Motor neuron (in vitro differentiated cells): ENCODE measurements at regions of chr12 and their contacts with region 1.

Region 1: GRCh38 chr12:52870351-52871290 is 21.8 kb upstream of the KRT78 start:
- ATAC-seq: peak in 3 of 8 experiments; percentile 6 to 54 (median 10)
- H3K4me3 ChIP-seq: no peak overlapping the region
- H3K27ac ChIP-seq: no peak overlapping the region
- H3K4me1 ChIP-seq: peaks cover 0 to 13% of the 10 kb centered on the region in 2 donors

Region 2: DNA sequence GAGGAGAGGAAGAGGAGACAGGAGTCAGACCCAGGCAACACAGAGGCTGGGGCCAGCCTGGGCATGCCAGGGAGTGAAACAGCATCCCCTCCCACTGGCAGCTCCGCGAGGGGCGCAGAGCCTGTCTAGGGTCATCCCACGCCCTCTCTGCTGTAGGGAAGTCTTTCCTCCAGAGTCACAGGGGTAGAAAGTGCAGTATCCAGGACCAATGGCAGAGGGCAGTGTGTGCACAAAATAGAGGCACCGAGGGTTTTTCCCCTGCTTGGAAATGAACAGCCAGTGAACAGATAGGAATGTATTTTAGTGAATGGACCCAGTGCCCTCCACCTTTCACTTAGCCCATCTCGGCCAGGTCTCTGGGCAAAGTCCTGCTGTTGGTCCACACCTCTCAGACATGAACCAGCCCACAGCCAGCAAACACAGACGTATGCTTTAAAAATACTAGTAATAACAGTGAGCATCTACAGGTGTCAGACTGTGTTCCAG is 287.6 kb before region 1 on chr12:
- in situ Hi-C with region 1: loop called in 4 of 9 experiments (anchors 5 to 25 kb)
- ATAC-seq: peak; percentile 50 to 91 (median 74)
- H3K4me3 ChIP-seq: no peak overlapping the region
- H3K27ac ChIP-seq: no peak overlapping the region
- H3K4me1 ChIP-seq: no peaks in the 10 kb centered on the region

Region 3: GRCh38 chr12:52667511-52667910 is 203.1 kb before region 1 on chr12:
- in situ Hi-C with region 1: loop called in 1 of 9 experiments (anchors 25 kb)
- ATAC-seq: peak in 2 of 8 experiments; percentile 30 to 43
- H3K4me3 ChIP-seq: no peak overlapping the region
- H3K27ac ChIP-seq: no peak overlapping the region
- H3K4me1 ChIP-seq: no peaks in the 10 kb centered on the region

Region 4: DNA sequence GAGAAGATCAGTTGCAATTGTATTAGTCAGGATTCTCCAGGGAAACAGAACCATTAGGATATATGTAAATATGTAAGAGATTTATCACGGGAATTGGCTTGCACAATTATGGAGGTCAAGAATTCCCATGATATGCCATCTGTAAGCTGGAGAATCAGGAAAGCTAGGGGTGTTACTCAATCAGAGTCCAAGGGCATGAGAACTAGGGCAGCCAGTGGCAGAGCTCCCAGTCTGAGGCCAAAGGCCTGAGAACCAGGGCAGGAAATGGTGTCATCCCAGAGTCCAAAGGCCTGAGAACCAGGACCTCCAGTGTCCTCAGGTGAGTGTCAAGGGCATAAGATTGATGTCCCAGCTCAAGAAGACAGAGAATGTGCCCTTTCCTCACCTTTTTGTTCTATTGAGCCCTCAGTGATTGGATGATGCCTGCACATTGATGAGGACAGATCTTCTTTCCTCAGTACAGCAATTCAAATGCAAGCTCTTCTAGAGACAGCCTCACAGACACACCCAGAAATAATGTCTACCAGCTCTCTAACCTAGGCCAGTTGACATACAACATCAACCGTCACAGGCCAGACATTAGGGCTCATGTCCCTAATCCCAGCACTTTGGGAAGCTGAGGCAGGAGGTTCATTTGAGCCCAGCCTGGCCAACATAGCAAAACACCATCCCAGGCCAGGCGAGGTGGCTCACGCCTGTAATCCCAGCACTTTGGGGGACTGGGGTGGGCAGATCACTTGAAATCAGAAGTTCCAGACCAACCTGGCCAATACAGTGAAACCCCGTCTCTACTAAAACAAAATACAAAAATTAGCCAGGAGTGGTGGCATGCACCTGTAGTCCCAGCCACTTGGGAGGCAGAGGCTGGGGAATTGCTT is 275.0 kb after region 1 on chr12:
- in situ Hi-C with region 1: no loop called
- ATAC-seq: peak in 3 of 8 experiments; percentile 55 to 68 (median 61)
- H3K4me3 ChIP-seq: no peak overlapping the region
- H3K27ac ChIP-seq: no peak overlapping the region
- H3K4me1 ChIP-seq: peaks cover 0 to 3% of the 10 kb centered on the region in 2 donors